Natural killer cell (primary cell): ENCODE measurements at regions of chr2 and their contacts with region 1.

Region 1: DNA sequence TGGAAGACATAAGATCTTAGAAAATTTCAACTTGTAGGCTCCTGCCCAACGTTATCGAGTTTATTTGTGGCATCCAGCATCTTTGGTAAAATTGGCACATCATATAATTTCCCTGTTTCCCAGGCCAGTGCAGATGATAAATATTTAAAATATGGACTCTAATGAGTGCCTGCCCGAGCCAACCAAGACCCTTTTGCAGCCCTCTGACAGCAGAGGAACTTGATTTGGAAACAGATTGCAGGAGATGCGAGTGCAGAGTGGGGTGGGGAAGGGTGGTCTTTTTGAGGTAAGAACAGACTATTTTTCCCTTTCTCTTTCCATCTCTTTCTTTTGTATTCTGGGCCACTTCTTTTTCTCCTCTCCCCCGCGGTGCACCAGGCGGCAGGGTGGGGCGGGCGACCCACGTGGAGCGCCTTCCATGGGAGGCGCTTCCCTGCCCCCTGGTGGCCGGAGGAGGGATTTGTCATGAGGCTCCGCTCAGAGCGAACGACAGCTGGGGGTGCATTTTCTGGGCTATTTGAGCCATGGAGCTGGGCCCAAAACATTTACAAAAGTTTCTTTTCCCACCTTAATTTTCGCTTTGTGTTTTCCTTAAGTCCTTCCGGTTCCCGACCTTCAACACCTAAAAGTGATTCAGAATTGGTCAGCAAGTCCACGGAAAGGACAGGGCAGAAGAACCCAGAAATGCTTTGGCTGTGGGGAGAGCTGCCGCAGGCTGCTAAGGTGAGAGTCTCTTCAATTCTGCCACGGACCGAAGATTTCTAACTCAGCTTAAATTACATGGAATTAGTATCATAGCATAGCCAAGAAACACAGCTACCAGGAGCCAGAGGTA is 32.7 kb downstream of the LPIN1 start:
- DNase-seq: peak; percentile 83 to 93
- ATAC-seq: peak; percentile 86 to 91 (median 86)
- H3K4me3 ChIP-seq: no peak overlapping the region
- H3K4me3 Mint-ChIP-seq: peak overlapping the region; percentile 82
- H3K27ac ChIP-seq: no peak overlapping the region
- H3K27ac Mint-ChIP-seq: peak overlapping the region; percentile 79 to 84
- H3K4me1 ChIP-seq: peaks cover 34% of the 10 kb centered on the region
- H3K4me1 Mint-ChIP-seq: peaks cover 44 to 45% of the 10 kb centered on the region in 2 donors
- H3K27me3 ChIP-seq: no peaks in the 10 kb centered on the region
- H3K27me3 Mint-ChIP-seq: no peaks in the 10 kb centered on the region
- CTCF ChIP-seq: peak; percentile 99

Region 2: GRCh38 chr2:11140492-11140891 is 638.6 kb before region 1 on chr2:
- intact Hi-C with region 1: no loop called
- DNase-seq: no peak
- ATAC-seq: no peak
- H3K4me3 ChIP-seq: no peak overlapping the region
- H3K4me3 Mint-ChIP-seq: no peak overlapping the region
- H3K27ac ChIP-seq: no peak overlapping the region
- H3K27ac Mint-ChIP-seq: no peak overlapping the region
- H3K4me1 ChIP-seq: peaks cover 2% of the 10 kb centered on the region
- H3K4me1 Mint-ChIP-seq: no peaks in the 10 kb centered on the region
- H3K27me3 ChIP-seq: no peaks in the 10 kb centered on the region
- H3K27me3 Mint-ChIP-seq: peaks cover 27 to 42% of the 10 kb centered on the region in 2 donors
- CTCF ChIP-seq: no peak

Region 3: DNA sequence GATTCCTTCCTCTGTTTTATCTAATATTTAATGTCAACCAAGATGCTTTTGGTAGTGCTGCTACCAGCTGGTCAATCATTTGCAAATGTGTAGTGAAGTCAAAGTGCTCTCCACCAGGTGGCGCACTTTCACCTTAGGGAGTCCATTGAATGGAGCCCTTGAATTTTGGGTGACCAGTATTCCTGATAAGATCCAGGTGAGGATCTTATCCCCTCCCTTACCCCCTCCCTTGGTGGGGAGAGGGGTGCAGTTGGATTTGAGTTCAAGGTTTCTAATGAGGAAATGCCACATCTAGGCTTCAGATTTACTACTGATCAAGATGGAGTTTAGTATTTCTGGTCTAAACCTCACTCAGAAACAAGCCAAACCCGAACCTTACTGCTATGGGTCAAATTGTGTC is 301.1 kb before region 1 on chr2:
- intact Hi-C with region 1: loop called (anchors 1 kb)
- DNase-seq: peak; percentile 68 to 89
- ATAC-seq: peak; percentile 72 to 81 (median 81)
- H3K4me3 ChIP-seq: no peak overlapping the region
- H3K4me3 Mint-ChIP-seq: no peak overlapping the region
- H3K27ac ChIP-seq: no peak overlapping the region
- H3K27ac Mint-ChIP-seq: no peak overlapping the region
- H3K4me1 ChIP-seq: peaks cover 1% of the 10 kb centered on the region
- H3K4me1 Mint-ChIP-seq: peaks cover 0 to 2% of the 10 kb centered on the region in 2 donors
- H3K27me3 ChIP-seq: peaks cover 17% of the 10 kb centered on the region
- H3K27me3 Mint-ChIP-seq: peaks cover 22 to 34% of the 10 kb centered on the region in 2 donors
- CTCF ChIP-seq: peak; percentile 93

Region 4: GRCh38 chr2:11688222-11689069 is 90.7 kb before region 1 on chr2:
- intact Hi-C with region 1: loop called (anchors 1 kb)
- DNase-seq: peak; percentile 70 to 89
- ATAC-seq: peak; percentile 85 to 87 (median 87)
- H3K4me3 ChIP-seq: no peak overlapping the region
- H3K4me3 Mint-ChIP-seq: peak overlapping the region; percentile 35
- H3K27ac ChIP-seq: no peak overlapping the region
- H3K27ac Mint-ChIP-seq: peak overlapping the region in 1 of 2 donors; percentile 51
- H3K4me1 ChIP-seq: peaks cover 11% of the 10 kb centered on the region
- H3K4me1 Mint-ChIP-seq: peaks cover 8 to 16% of the 10 kb centered on the region in 2 donors
- H3K27me3 ChIP-seq: no peaks in the 10 kb centered on the region
- H3K27me3 Mint-ChIP-seq: peaks cover 2 to 13% of the 10 kb centered on the region in 2 donors
- CTCF ChIP-seq: peak; percentile 86

Region 5: GRCh38 chr2:11738589-11739436 is 40.3 kb before region 1 on chr2:
- intact Hi-C with region 1: loop called (anchors 1 kb)
- DNase-seq: peak in 1 of 2 donors; percentile 66
- ATAC-seq: peak; percentile 72 to 97 (median 93)
- H3K4me3 ChIP-seq: no peak overlapping the region
- H3K4me3 Mint-ChIP-seq: no peak overlapping the region
- H3K27ac ChIP-seq: no peak overlapping the region
- H3K27ac Mint-ChIP-seq: peak overlapping the region in 1 of 2 donors; percentile 58
- H3K4me1 ChIP-seq: peaks cover 10% of the 10 kb centered on the region
- H3K4me1 Mint-ChIP-seq: peaks cover 9 to 12% of the 10 kb centered on the region in 2 donors
- H3K27me3 ChIP-seq: peaks cover 2% of the 10 kb centered on the region
- H3K27me3 Mint-ChIP-seq: peaks cover 3 to 7% of the 10 kb centered on the region in 2 donors
- CTCF ChIP-seq: peak; percentile 31

Region 6: DNA sequence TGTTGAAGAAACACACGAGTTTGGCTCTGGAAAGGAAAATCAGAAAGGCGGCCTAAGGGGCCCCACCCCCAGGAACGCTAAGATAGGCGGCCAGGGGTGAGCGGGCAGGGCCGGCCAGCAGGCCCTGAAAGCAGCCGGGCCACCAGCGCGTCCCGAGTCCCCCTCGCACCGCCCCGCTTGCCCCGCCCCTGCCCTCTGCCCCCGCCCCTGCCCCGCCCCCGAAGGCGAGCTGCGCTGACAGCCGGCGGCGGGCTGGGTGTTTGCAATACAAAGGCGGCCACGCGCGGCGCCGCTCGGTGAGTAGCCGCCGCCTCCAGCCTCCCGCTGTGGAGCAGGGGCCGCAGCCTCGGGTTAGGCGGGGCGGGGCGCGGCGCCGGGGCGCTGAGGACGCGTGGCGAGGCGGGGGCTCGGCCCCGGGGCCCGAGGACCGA is 32.7 kb before region 1 on chr2 and contains the start of gene LPIN1:
- intact Hi-C with region 1: loop called (anchors 1 kb)
- DNase-seq: peak; percentile 86 to 92
- ATAC-seq: peak; percentile 70 to 90 (median 80)
- H3K4me3 ChIP-seq: peak within 1 kb of the TSS; percentile 54
- H3K4me3 Mint-ChIP-seq: peak within 1 kb of the TSS; percentile 95
- H3K27ac ChIP-seq: peak within 1 kb of the TSS; percentile 67
- H3K27ac Mint-ChIP-seq: peak within 1 kb of the TSS; percentile 93 to 94
- H3K4me1 ChIP-seq: peaks cover 73% of the 10 kb centered on the region
- H3K4me1 Mint-ChIP-seq: peaks cover 62 to 64% of the 10 kb centered on the region in 2 donors
- H3K27me3 ChIP-seq: no peaks in the 10 kb centered on the region
- H3K27me3 Mint-ChIP-seq: no peaks in the 10 kb centered on the region
- CTCF ChIP-seq: no peak
- total RNA-seq, gene LPIN1: 95.0 to 122 (median 118) TPM

Region 7: DNA sequence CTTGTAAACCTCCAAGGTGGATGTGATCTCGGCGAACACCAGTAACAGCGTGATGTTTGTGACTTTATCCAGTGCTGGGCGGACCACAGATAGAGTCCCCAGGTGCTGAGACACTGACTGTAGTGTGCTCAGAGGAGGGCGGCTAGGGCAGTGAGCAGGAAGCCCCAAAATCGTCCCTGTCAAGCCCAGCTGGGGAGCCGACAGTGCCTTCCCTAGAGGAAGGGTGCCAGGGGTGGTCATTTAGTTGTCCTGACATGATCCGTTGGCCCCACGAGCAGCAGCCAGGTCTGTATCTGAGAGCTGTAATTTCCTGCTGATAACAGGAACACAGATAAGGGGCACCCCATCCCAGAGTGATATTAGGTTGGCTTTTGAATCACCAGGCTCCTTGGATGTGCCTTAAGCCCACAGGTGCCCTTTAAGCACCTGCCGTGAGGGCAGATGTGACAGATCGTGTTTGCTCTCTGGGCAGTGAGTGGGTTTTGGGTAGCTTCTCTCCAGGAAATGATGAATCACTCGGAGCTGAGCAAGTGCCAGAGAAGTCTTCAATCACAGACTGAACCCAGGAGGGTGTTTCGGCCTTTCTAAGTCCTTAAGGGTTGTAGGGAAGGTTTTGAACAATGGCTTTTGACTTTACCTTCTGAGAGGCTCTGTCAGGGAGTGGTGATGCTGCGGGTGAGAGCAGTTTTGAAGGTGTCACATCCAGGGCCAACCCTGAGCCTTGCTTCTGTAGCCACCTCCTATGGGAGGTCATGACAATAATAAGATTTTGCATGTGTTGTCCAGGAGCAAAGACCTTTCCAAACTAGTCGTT is 25.0 kb before region 1 on chr2:
- intact Hi-C with region 1: loop called (anchors 1 kb)
- DNase-seq: peak; percentile 53 to 77
- ATAC-seq: peak; percentile 53 to 66 (median 56)
- H3K4me3 ChIP-seq: peak overlapping the region; percentile 15
- H3K4me3 Mint-ChIP-seq: peak overlapping the region; percentile 88
- H3K27ac ChIP-seq: peak overlapping the region; percentile 90
- H3K27ac Mint-ChIP-seq: peak overlapping the region; percentile 95
- H3K4me1 ChIP-seq: peaks cover 73% of the 10 kb centered on the region
- H3K4me1 Mint-ChIP-seq: peaks cover 78 to 81% of the 10 kb centered on the region in 2 donors
- H3K27me3 ChIP-seq: no peaks in the 10 kb centered on the region
- H3K27me3 Mint-ChIP-seq: no peaks in the 10 kb centered on the region
- CTCF ChIP-seq: no peak

Region 8: GRCh38 chr2:12005886-12006681 is 226.9 kb after region 1 on chr2:
- intact Hi-C with region 1: no loop called
- DNase-seq: peak; percentile 81 to 91
- ATAC-seq: peak; percentile 86 to 98 (median 87)
- H3K4me3 ChIP-seq: no peak overlapping the region
- H3K4me3 Mint-ChIP-seq: peak overlapping the region; percentile 55
- H3K27ac ChIP-seq: no peak overlapping the region
- H3K27ac Mint-ChIP-seq: peak overlapping the region; percentile 50 to 81
- H3K4me1 ChIP-seq: peaks cover 19% of the 10 kb centered on the region
- H3K4me1 Mint-ChIP-seq: peaks cover 50 to 59% of the 10 kb centered on the region in 2 donors
- H3K27me3 ChIP-seq: peaks cover 67% of the 10 kb centered on the region
- H3K27me3 Mint-ChIP-seq: peaks cover 74 to 94% of the 10 kb centered on the region in 2 donors
- CTCF ChIP-seq: no peak